Dorsolateral prefrontal cortex (tissue), 120 donors: ENCODE measurements at regions of chr1 and their contacts with region 1.

Region 1: DNA sequence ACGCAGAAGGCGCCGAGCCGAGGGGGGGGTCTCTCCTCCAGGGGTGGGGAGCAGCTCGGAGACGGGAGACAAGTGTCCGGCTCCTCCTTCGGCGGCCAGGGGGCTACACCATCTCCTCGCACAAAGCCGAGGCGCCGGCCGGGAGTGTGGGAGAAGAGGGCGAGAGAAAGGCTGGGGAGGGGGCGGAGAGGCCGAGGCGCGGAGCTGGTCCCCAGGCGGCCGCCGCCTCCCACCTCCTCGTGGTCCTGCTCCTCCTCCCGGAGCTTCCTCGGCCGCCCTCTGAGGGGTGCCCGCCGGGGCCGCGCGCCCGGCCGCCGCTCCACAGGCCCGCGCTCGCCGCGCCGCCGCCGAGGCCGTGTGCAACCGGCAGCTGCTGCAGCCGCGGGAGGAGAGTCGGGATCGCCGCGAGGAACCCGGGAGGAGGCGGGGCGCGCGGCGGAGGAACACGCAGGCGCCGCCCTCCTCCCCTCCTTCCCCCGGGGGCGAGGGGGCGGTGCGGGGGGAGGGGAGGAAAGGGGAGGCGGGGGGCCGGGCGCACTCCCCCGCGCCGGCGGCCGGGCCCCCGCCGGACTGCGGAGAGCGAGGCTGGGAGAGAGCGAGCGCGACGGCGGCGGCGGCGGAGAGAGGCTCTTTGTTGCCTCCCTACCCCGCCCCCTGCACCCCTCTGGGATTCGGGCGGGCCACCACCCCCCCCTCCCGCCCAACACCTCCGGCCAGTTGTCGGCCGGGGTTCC is at the start of gene ENAH:
- DNase-seq: peak; percentile 51 to 89 (median 76)
- H3K4me3 ChIP-seq: peak within 1 kb of the TSS; percentile 68 to 98 (median 90)
- H3K27ac ChIP-seq: peak within 1 kb of the TSS; percentile 84 to 100 (median 98)
- H3K27me3 ChIP-seq: no peaks in the 10 kb centered on the region
- CTCF ChIP-seq: peak in 9 of 56 donors; percentile 4 to 31 (median 11)
- total RNA-seq, gene ENAH: 57.3 to 134 (median 81.4) TPM

Region 2: DNA sequence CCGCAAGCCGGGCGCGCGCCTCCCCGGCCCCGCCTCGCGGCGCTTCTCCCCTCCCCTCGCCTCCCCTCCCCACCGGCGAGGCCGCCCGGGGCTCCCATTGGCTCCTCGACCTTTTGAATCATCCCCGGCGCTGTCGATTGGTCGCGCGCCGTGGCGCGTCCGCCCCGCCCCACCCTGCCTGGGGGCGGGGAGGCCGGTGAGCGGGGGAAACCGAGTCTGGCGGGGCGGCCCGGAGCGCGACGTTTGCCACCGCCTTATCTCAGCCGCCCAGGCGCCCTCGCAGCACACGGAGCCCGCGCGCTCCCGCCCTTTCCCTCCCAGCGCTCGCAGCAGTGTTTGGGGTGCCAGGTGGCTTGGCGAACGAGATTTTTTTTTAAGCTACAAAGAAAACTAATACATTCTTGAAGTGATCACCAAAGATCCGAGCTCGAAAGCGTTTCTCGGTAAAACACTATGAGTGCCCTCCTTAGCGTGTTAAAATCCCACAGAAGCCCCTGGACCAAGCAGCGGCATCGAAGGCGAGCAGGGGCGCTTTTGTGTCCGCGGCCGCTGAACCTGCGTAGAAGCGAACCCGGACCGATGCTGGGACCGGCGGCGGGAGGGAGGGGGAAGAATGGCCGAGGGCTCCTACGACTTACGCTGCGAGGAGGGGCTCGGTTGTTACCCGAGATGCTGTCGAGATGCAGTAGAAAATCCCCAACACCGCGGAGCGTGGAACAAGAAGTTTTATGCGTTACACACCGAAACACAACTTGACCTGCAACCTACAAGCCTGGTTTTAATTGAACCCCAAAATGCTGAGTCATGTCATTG is 224.6 kb before region 1 on chr1:
- intact Hi-C with region 1: loop called in 1 of 2 experiments (anchors 5 kb)
- DNase-seq: peak; percentile 88 to 98 (median 93)
- H3K4me3 ChIP-seq: peak overlapping the region; percentile 68 to 99 (median 91)
- H3K27ac ChIP-seq: peak overlapping the region; percentile 67 to 97 (median 93)
- H3K27me3 ChIP-seq: no peaks in the 10 kb centered on the region
- CTCF ChIP-seq: peak in 7 of 56 donors; percentile 2 to 28 (median 6)

Region 3: DNA sequence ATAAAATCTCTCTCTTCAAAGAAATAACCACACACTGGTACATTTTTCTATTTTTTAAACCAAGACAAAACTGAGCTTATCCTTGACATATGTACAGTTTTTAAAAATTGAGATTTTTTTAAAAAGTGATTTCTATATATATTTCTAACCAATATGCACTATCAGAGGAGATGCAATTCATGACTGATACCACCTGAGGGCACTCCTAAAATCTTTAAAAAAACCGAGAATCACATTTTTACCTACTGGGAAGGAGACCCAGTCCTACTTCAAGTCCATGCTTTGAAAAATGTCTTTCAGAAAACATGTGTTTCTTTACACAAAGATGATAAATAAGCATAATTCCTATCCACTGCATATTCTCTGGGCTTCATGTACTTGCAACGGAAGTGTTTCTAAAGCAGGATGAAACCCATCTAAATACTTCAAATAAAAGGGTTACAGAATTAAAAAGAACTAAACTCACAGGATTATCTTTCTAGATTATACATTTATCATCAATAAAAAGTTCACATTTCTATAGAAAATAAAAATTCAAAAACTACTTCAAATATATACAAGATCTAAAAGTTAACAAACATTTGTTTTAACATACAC is 98.6 kb before region 1 on chr1:
- intact Hi-C with region 1: loop called (anchors 5 to 10 kb)
- DNase-seq: no peak
- H3K4me3 ChIP-seq: no peak overlapping the region
- H3K27ac ChIP-seq: peak overlapping the region in 5 of 59 donors; percentile 2 to 34 (median 4)
- H3K27me3 ChIP-seq: no peaks in the 10 kb centered on the region
- CTCF ChIP-seq: peak in 55 of 56 donors; percentile 37 to 80 (median 69)

Region 4: GRCh38 chr1:225572422-225572821 is 80.5 kb before region 1 on chr1:
- intact Hi-C with region 1: loop called in 1 of 2 experiments (anchors 5 kb)
- DNase-seq: no peak
- H3K4me3 ChIP-seq: no peak overlapping the region
- H3K27ac ChIP-seq: peak overlapping the region in 1 of 59 donors; percentile 11
- H3K27me3 ChIP-seq: no peaks in the 10 kb centered on the region
- CTCF ChIP-seq: peak in 10 of 56 donors; percentile 11 to 34 (median 20)

Region 5: DNA sequence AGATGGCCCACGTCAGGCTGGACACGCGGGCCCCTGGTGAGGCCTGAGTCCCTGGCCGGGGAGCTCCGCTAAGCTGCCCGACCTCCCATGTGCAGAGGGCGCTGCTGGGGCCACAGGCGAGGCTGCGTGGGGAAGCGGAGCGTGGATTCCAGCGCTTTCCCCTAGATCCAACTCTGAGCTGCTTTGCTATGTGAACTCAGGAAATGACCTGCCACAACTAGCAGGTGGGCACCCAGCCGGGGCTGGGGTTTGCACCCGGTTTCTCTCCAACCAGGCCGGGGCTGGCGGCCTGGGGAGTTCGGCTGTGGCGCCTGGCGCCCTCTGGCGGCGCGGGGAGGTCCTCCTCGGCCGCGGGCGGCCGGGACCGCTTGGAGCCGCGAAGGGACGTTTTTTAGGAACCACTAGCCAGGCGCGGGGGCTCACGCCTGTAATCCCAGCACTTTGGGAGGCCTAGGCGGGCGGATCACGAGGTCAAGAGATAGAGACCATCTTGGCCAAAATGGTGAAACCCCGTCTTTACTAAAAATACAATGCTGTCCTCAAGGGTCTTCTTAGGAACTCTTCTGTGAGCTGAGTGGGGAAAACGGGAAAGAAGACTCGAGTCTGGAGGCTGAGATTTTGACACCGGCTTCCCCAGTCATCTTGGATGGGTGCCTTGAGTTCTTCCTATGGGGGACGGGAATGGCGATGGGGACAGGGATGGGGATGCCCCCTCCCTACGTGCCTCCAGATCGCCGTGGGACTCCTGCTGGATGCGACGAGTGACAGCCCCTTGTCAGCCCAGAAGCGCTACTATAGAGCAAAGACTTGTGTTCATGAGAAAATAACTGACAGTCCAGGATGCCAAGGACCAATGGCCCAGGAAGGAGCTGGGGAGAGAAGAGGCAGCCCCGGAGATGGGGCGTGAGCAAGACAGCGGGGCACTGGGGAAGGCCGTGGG is 258.6 kb after region 1 on chr1:
- intact Hi-C with region 1: loop called in 1 of 2 experiments (anchors 10 kb)
- DNase-seq: peak in 5 of 10 donors; percentile 30 to 78 (median 47)
- H3K4me3 ChIP-seq: peak overlapping the region in 24 of 59 donors; percentile 2 to 41 (median 18)
- H3K27ac ChIP-seq: peak overlapping the region in 20 of 59 donors; percentile 7 to 74 (median 36)
- H3K27me3 ChIP-seq: no peaks in the 10 kb centered on the region
- CTCF ChIP-seq: peak; percentile 33 to 93 (median 81)

Region 6: GRCh38 chr1:225923692-225924555 is 271.0 kb after region 1 on chr1 and contains the start of gene PYCR2:
- intact Hi-C with region 1: loop called (anchors 5 to 10 kb)
- DNase-seq: peak; percentile 89 to 98 (median 94)
- H3K4me3 ChIP-seq: peak within 1 kb of the TSS; percentile 66 to 100 (median 94)
- H3K27ac ChIP-seq: peak within 1 kb of the TSS; percentile 35 to 98 (median 91)
- H3K27me3 ChIP-seq: no peaks in the 10 kb centered on the region
- CTCF ChIP-seq: peak in 32 of 56 donors; percentile 4 to 61 (median 30)
- total RNA-seq, gene PYCR2: 44.8 to 116 (median 65.6) TPM

Region 7: GRCh38 chr1:225977937-225978748 is 325.2 kb after region 1 on chr1:
- intact Hi-C with region 1: loop called in 1 of 2 experiments (anchors 10 kb)
- DNase-seq: no peak
- H3K4me3 ChIP-seq: no peak overlapping the region
- H3K27ac ChIP-seq: no peak overlapping the region
- H3K27me3 ChIP-seq: no peaks in the 10 kb centered on the region
- CTCF ChIP-seq: no peak